T-cell (primary cell): ENCODE measurements at regions of chr1 and their contacts with region 1.

Region 1: GRCh38 chr1:156193488-156194299 is at the start of gene SLC25A44:
- DNase-seq: peak; percentile 91 to 100 (median 96)
- ATAC-seq: peak; percentile 97 to 99 (median 99)
- H3K4me3 ChIP-seq: peak within 1 kb of the TSS; percentile 85 to 89
- H3K4me3 Mint-ChIP-seq: peak within 1 kb of the TSS; percentile 94 to 100 (median 98)
- H3K27ac ChIP-seq: peak within 1 kb of the TSS; percentile 80
- H3K27ac Mint-ChIP-seq: peak within 1 kb of the TSS; percentile 89 to 93
- H3K4me1 ChIP-seq: peaks cover 5 to 40% of the 10 kb centered on the region in 2 experiments
- H3K4me1 Mint-ChIP-seq: peaks cover 54 to 56% (median 55%) of the 10 kb centered on the region in 3 donors
- H3K27me3 ChIP-seq: no peaks in the 10 kb centered on the region
- H3K27me3 Mint-ChIP-seq: no peaks in the 10 kb centered on the region
- total RNA-seq, gene SLC25A44: 16.8 to 24.5 (median 21.4) TPM

Region 2: GRCh38 chr1:156212833-156213643 is 19.3 kb after region 1 on chr1 and contains the start of gene PMF1:
- CTCF ChIA-PET with region 1: interaction called, 8 to 23 read pairs
- POLR2A ChIA-PET with region 1: interaction called in 1 of 2 experiments, 32 read pairs
- DNase-seq: peak; percentile 90 to 96 (median 94)
- ATAC-seq: peak; percentile 95 to 97 (median 96)
- H3K4me3 ChIP-seq: peak within 1 kb of the TSS; percentile 91 to 93
- H3K4me3 Mint-ChIP-seq: peak within 1 kb of the TSS; percentile 95 to 96 (median 95)
- H3K27ac ChIP-seq: peak within 1 kb of the TSS; percentile 97
- H3K27ac Mint-ChIP-seq: peak within 1 kb of the TSS; percentile 98
- H3K4me1 ChIP-seq: peaks cover 7 to 37% of the 10 kb centered on the region in 2 experiments
- H3K4me1 Mint-ChIP-seq: peaks cover 31 to 48% (median 42%) of the 10 kb centered on the region in 3 donors
- H3K27me3 ChIP-seq: no peaks in the 10 kb centered on the region
- H3K27me3 Mint-ChIP-seq: no peaks in the 10 kb centered on the region
- total RNA-seq, gene PMF1: 54.7 to 58.7 (median 57.6) TPM